GM12878 (cell line): ENCODE measurements at regions of chr2 and their contacts with region 1.

Region 1: DNA sequence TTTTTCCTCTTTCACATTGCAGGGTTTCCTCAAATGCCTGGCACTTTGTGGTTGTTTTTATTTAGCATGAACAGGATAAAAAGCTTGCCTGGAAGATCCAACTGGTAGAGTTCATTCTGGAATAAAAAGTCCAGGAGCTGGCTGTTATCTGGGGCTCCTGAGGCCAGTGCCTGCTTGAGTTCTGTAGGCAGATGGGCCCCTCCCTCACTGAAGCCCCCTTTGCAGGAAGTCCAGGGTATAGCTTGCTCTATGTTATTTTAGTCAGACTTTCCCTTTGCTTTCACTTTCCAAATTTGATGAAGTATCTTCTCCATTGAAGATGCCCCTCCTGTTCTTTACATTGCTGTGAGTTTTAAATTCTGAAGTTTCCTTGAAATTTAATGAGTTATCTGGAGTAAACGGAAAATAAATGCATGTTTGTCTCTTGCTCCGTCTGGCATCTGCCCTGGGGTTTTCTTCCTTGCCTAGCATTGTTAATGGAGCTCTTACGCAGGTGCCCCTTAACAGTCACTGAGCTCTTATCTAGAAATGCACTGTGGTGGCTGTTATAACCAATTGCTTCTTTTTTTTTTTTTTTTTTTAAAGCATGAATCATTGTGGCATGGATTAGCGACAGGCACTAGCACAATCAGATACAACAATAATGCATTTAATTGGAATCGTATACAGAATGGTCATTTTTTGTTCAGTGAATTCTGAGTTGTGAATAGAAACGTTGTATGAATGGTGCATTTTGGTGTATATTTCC is 27.0 kb upstream of the LPIN1 start:
- DNase-seq: no peak
- ATAC-seq: no peak
- H3K4me3 ChIP-seq: no peak overlapping the region
- H3K27ac ChIP-seq: no peak overlapping the region
- H3K4me1 ChIP-seq: no peaks in the 10 kb centered on the region
- H3K27me3 ChIP-seq: peaks cover 2 to 8% of the 10 kb centered on the region in 2 experiments; a peak in 2 of 4 replicates
- CTCF ChIP-seq: no peak
- EP300 ChIP-seq: no peak
- POLR2A ChIP-seq: no peak
- RAD21 ChIP-seq: no peak

Region 2: DNA sequence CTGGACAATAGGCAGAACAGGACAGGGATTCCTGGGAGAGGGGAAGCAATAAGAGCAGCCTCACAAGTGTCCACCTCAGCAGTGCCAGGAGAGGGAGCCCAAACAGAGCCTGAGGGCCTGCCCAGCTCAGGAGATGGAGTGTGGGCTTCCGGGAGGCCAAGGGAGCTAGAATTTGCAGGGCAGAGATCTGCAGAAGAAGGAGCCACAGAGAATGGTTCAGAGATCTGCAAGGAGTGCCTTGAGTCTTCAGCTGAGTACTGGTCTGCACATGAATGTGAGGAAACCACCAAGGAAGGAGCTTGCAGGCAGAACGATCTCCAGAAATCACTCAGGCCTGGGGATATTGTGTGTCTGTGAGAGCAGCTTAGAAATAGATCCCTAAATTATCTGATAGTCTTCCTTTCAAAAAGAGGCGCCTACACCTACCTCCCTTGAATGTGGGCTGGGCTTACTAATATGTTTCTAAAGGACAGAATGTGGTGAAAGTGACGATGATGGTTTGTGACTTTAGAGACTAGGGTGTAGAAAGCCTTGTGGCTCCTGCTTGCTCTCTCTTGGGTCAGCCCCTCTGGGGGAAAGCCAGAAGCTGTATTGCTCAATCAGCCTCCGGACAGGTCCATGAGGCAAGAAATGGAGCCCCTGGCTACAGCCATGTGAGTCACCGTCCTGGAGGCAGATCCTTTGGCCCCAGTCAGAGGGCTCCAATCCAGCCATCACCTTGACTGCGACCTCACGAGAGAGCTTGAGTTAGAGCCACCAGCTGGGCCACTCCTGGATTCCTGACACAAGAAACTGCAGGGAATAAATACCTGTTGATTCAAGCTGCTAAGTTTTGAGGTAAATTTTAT is 19.4 kb after region 1 on chr2:
- CTCF ChIA-PET with region 1: interaction called, 10 read pairs
- POLR2A ChIA-PET with region 1: no interaction called
- RAD21 ChIA-PET with region 1: no interaction called
- SMC1A ChIA-PET with region 1: interaction called, 6 read pairs
- in situ Hi-C with region 1: no loop called
- intact Hi-C with region 1: no loop called
- DNase-seq: no peak
- ATAC-seq: peak; percentile 96
- H3K4me3 ChIP-seq: no peak overlapping the region
- H3K27ac ChIP-seq: no peak overlapping the region
- H3K4me1 ChIP-seq: peaks cover 9% of the 10 kb centered on the region
- H3K27me3 ChIP-seq: peaks cover 0 to 5% of the 10 kb centered on the region in 2 experiments; a peak in 1 of 4 replicates
- CTCF ChIP-seq: peak; percentile 46 to 70 (median 67)
- EP300 ChIP-seq: no peak
- POLR2A ChIP-seq: no peak
- RAD21 ChIP-seq: peak; percentile 77